Activated naive CD4-positive, alpha-beta T cell treated with anti-CD3 and anti-CD28 coated beads for 36 hours (primary cell): ENCODE measurements at regions of chr19 and their contacts with region 1.

Region 1: GRCh38 chr19:29761575-29762232 is 46.6 kb upstream of the C19orf12 start:
- DNase-seq: no peak
- H3K4me3 Mint-ChIP-seq: no peak overlapping the region
- H3K27ac Mint-ChIP-seq: no peak overlapping the region
- H3K4me1 Mint-ChIP-seq: peaks cover 3% of the 10 kb centered on the region
- H3K27me3 Mint-ChIP-seq: no peaks in the 10 kb centered on the region

Region 2: DNA sequence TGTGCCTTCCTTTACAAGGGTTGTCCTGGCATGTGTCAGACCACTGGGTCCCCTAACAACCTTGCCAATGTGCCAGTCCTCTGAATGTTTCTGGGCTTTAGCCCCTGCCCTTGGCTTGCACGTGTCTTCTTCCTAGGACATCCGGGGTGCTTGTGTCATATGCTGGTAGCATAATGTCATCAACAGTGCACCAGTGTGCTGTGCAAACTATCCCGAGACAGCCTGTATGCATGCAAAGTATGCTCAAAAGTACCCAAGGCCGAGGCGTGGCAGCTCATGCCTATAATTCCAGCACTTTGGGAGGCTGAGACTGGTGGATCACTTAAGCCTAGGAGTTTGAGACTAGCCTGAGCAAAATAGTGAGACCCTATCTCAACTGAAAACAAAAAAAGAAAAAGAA is 25.9 kb before region 1 on chr19:
- CTCF ChIA-PET with region 1: no interaction called
- intact Hi-C with region 1: loop called (anchors 1 kb)
- DNase-seq: no peak
- H3K4me3 Mint-ChIP-seq: no peak overlapping the region
- H3K27ac Mint-ChIP-seq: no peak overlapping the region
- H3K4me1 Mint-ChIP-seq: no peaks in the 10 kb centered on the region
- H3K27me3 Mint-ChIP-seq: no peaks in the 10 kb centered on the region

Region 3: GRCh38 chr19:29771708-29772414 is 10.2 kb after region 1 on chr19:
- CTCF ChIA-PET with region 1: interaction called, 17 read pairs
- intact Hi-C with region 1: no loop called
- DNase-seq: peak; percentile 61
- H3K4me3 Mint-ChIP-seq: no peak overlapping the region
- H3K27ac Mint-ChIP-seq: no peak overlapping the region
- H3K4me1 Mint-ChIP-seq: no peaks in the 10 kb centered on the region
- H3K27me3 Mint-ChIP-seq: no peaks in the 10 kb centered on the region

Region 4: GRCh38 chr19:29858000-29858596 is 96.4 kb after region 1 on chr19:
- CTCF ChIA-PET with region 1: interaction called, 10 read pairs
- intact Hi-C with region 1: no loop called
- DNase-seq: peak; percentile 58
- H3K4me3 Mint-ChIP-seq: no peak overlapping the region
- H3K27ac Mint-ChIP-seq: no peak overlapping the region
- H3K4me1 Mint-ChIP-seq: peaks cover 3% of the 10 kb centered on the region
- H3K27me3 Mint-ChIP-seq: no peaks in the 10 kb centered on the region